ENCODE measurements at regions of chr14 and their contacts with region 1.

Region 1: DNA sequence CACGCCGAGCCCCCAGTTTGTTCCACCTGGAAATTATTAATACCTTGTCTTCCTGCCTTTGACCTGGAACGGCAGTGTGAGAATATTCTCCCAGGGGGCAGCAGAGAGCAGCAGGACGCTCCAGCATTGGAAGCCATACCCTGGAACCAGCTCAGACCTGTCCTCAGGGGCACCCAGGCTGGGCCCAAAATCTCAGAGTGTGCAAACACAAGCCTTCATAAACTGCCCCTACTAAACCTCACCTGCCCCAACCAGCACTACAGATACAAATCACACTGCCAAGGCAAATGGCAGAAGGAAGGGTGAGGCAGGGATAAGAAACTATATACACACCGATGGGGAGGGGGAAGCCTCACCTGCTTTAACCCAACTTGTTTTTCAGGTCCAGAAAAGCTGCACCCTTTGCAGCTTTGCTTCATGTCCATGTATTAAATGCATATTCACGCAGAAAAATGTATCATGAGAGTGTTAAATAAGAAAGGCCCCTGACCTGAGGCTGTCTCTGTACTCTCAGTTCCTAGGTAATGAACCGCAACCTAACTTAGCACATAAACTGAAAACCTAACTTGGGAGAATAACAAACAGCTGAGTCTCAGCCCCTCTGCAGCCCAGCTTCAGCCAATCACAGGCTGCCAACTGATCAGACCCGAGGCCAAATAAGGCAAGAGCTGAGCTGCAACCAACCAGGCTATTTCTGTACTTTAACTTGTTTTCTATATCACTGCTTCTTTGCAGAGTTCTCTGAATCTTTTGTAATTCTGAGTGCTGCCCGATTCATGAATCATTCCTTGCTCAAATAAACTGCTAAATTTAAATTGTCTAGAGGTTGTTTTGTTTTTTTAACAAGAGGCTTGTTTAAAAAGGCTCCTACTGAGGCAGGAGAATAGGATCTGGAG is 130.1 kb downstream of the SPTSSA start:
- DNase-seq: peak; percentile 82
- H3K4me3 Mint-ChIP-seq: peak overlapping the region; percentile 11
- H3K27ac Mint-ChIP-seq: peak overlapping the region; percentile 70
- H3K4me1 Mint-ChIP-seq: peaks cover 20% of the 10 kb centered on the region
- H3K27me3 Mint-ChIP-seq: no peaks in the 10 kb centered on the region
- CTCF ChIP-seq: peak; percentile 78

Region 2: GRCh38 chr14:33728010-33728498 is 603.9 kb before region 1 on chr14:
- CTCF ChIA-PET with region 1: no interaction called
- POLR2A ChIA-PET with region 1: no interaction called
- intact Hi-C with region 1: no loop called
- DNase-seq: peak; percentile 0
- H3K4me3 Mint-ChIP-seq: no peak overlapping the region
- H3K27ac Mint-ChIP-seq: no peak overlapping the region
- H3K4me1 Mint-ChIP-seq: no peaks in the 10 kb centered on the region
- H3K27me3 Mint-ChIP-seq: no peaks in the 10 kb centered on the region
- CTCF ChIP-seq: no peak

Region 3: GRCh38 chr14:34161351-34162082 is 170.5 kb before region 1 on chr14:
- CTCF ChIA-PET with region 1: no interaction called
- POLR2A ChIA-PET with region 1: no interaction called
- intact Hi-C with region 1: no loop called
- DNase-seq: peak; percentile 70
- H3K4me3 Mint-ChIP-seq: no peak overlapping the region
- H3K27ac Mint-ChIP-seq: peak overlapping the region; percentile 69
- H3K4me1 Mint-ChIP-seq: peaks cover 7% of the 10 kb centered on the region
- H3K27me3 Mint-ChIP-seq: no peaks in the 10 kb centered on the region
- CTCF ChIP-seq: no peak

Region 4: GRCh38 chr14:34345718-34346465 is 13.9 kb after region 1 on chr14:
- CTCF ChIA-PET with region 1: interaction called, 10 read pairs
- POLR2A ChIA-PET with region 1: no interaction called
- intact Hi-C with region 1: no loop called
- DNase-seq: no peak
- H3K4me3 Mint-ChIP-seq: no peak overlapping the region
- H3K27ac Mint-ChIP-seq: no peak overlapping the region
- H3K4me1 Mint-ChIP-seq: no peaks in the 10 kb centered on the region
- H3K27me3 Mint-ChIP-seq: no peaks in the 10 kb centered on the region
- CTCF ChIP-seq: no peak

Region 5: GRCh38 chr14:34365309-34365915 is 33.4 kb after region 1 on chr14:
- CTCF ChIA-PET with region 1: interaction called, 41 read pairs
- POLR2A ChIA-PET with region 1: interaction called, 7 read pairs
- intact Hi-C with region 1: no loop called
- DNase-seq: no peak
- H3K4me3 Mint-ChIP-seq: no peak overlapping the region
- H3K27ac Mint-ChIP-seq: no peak overlapping the region
- H3K4me1 Mint-ChIP-seq: peaks cover 62% of the 10 kb centered on the region
- H3K27me3 Mint-ChIP-seq: no peaks in the 10 kb centered on the region
- CTCF ChIP-seq: no peak

Region 6: GRCh38 chr14:34461334-34462131 is 129.6 kb after region 1 on chr14:
- CTCF ChIA-PET with region 1: interaction called, 5 read pairs
- POLR2A ChIA-PET with region 1: interaction called, 27 read pairs
- intact Hi-C with region 1: loop called (anchors 1 kb)
- DNase-seq: peak; percentile 62
- H3K4me3 Mint-ChIP-seq: peak overlapping the region; percentile 91
- H3K27ac Mint-ChIP-seq: peak overlapping the region; percentile 85
- H3K4me1 Mint-ChIP-seq: peaks cover 13% of the 10 kb centered on the region
- H3K27me3 Mint-ChIP-seq: no peaks in the 10 kb centered on the region
- CTCF ChIP-seq: no peak

Region 7: DNA sequence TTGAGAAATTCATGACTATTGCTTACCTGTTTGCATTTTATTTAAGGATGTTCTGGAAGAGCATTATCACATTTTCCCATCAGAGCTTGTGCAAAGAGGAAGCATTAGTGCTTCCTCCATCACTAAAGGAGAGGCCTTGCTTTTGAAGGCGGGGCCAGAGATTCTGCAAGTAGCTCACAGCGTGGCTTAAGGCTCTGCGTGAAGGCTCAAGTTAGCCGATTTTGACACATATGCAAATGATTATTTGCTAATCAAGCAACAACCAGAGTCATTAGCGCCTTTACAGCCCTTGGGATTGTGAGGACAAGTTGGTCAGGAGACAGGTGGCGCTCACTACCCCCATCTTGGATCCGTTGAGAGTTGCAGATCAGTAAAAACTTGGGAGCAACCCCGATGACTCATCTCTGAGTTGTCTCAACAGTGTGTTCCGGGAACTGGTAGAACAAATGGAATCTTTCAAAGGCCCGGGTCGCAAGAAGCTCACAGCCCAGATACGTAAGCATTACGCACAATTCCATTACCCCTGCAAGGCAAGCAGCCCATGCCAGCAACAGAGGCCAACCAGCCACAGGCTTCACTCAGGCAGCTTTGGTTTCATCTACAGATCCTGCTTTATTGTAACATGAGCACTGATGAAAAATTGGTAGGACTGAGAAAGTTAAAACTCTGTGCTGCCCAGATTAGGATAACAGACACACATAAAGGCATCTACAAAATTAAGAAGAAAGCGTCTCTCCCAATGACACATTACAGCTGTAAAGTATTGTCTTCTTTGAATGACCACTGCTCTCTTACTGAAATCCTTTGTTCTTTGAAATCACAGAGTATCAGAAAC is 164.9 kb after region 1 on chr14:
- CTCF ChIA-PET with region 1: interaction called, 102 read pairs
- POLR2A ChIA-PET with region 1: interaction called, 26 read pairs
- intact Hi-C with region 1: loop called (anchors 1 kb)
- DNase-seq: peak; percentile 99
- H3K4me3 Mint-ChIP-seq: peak overlapping the region; percentile 26
- H3K27ac Mint-ChIP-seq: peak overlapping the region; percentile 97
- H3K4me1 Mint-ChIP-seq: peaks cover 18% of the 10 kb centered on the region
- H3K27me3 Mint-ChIP-seq: no peaks in the 10 kb centered on the region
- CTCF ChIP-seq: no peak

Region 8: GRCh38 chr14:34539407-34540180 is 207.6 kb after region 1 on chr14 and contains the start of gene EAPP:
- CTCF ChIA-PET with region 1: interaction called, 8 read pairs
- POLR2A ChIA-PET with region 1: interaction called, 12 read pairs
- intact Hi-C with region 1: loop called (anchors 5 kb)
- DNase-seq: peak; percentile 97
- H3K4me3 Mint-ChIP-seq: peak within 1 kb of the TSS; percentile 98
- H3K27ac Mint-ChIP-seq: peak within 1 kb of the TSS; percentile 100
- H3K4me1 Mint-ChIP-seq: peaks cover 4% of the 10 kb centered on the region
- H3K27me3 Mint-ChIP-seq: no peaks in the 10 kb centered on the region
- CTCF ChIP-seq: no peak
- total RNA-seq, gene EAPP: 31.5 and 38.9 TPM in 2 replicates

Measured in MCF 10A (cell line).